Activated CD4-positive, alpha-beta T cell treated with anti-CD3 and anti-CD28 coated beads, Interleukin-2, amount 10 ng/mL, durations not matched to agents 24 days and 14 days (primary cell): ENCODE measurements at regions of chr20 and their contacts with region 1.

Region 1: GRCh38 chr20:53750827-53751619 is 157.4 kb upstream of the ZNF217 start:
- DNase-seq: peak; percentile 89
- H3K4me3 Mint-ChIP-seq: peak overlapping the region; percentile 51
- H3K27ac Mint-ChIP-seq: peak overlapping the region; percentile 98
- H3K4me1 Mint-ChIP-seq: peaks cover 63% of the 10 kb centered on the region
- H3K27me3 Mint-ChIP-seq: no peaks in the 10 kb centered on the region

Region 2: DNA sequence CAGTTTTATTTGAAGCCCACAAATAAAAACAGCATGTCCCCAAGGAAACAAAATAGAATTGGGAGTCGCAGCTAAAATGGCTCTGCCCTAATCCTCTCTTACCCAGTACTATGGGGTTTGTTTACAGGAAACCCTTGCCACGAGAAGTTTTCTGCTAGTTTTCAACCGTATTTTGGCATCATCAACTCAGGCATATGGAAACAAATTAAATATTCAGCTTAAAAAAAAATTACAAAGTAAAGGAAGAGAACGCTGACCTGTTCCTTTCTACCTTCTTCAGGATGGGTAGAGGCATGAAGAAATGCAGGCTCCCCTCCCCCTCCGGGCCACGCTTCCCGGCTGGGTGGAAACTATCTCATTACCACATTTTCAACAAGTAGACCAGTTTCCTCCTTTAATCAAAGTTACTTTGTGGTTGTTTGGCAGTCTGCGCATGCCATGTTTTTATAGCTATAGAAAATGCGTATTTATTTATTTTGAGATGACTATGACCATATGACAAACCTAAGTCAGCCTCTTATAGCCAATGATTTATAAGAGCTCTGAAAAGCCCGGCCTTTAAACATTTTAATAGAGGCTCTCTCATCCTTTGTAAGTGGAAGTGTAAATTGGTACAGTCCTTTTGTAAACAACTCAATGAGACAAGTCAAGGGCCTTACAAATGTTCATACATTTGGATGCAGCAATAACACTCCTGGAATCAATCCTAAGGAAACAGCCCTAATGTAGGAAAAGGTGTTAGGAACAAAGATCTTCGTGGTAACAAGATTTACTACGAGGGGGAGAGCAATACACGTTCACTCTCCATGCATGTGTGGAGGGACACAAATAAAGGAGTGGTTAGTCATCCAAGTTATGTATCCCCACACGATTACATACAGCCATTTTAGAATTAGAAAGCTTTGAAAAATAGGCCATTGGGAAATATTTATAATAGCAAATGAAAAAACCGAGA is 141.3 kb before region 1 on chr20:
- intact Hi-C with region 1: loop called (anchors 1 kb)
- DNase-seq: peak; percentile 93
- H3K4me3 Mint-ChIP-seq: peak overlapping the region; percentile 83
- H3K27ac Mint-ChIP-seq: peak overlapping the region; percentile 97
- H3K4me1 Mint-ChIP-seq: peaks cover 27% of the 10 kb centered on the region
- H3K27me3 Mint-ChIP-seq: no peaks in the 10 kb centered on the region

Region 3: DNA sequence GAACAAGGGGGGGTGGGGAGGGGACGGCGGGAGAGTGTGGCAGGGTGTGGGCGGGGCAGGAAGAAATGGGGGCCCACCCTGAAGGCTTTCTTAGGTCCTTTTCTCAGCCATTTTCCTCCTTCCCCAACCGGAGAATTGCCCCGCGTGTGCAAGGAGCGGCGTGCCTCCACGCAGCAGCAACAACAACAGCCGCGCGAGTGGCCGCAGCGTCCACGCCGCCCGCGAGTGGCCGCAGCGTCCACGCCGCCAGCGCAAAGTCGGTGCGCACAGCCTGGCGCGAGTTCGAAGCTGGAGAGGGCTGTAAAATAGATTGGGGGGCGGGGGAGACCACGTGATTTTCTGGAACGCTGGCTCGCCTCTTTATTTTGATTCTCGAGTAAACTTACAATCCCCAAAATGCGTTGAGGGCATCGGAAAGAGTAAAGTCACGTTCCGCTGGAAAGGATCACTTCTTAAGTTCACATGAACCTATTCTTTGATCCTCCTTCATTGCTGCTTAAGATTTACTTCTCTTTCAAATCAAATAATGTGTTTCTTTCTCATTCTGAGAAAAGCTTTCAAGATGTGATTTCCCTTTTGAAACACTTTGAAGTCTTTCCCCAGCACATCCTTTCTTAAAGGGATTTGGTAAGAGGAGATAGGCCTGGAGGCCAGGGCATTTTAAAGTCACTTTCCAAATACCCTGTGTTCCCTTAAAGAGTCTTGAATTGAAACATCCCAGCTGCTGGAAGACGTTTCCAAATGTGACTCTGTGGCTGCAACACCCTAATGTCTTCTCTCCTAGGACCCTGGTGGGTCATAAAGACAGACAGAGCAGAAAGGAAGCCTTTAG is 90.7 kb before region 1 on chr20:
- intact Hi-C with region 1: loop called (anchors 2 kb)
- DNase-seq: peak; percentile 82
- H3K4me3 Mint-ChIP-seq: peak overlapping the region; percentile 84
- H3K27ac Mint-ChIP-seq: peak overlapping the region; percentile 93
- H3K4me1 Mint-ChIP-seq: peaks cover 54% of the 10 kb centered on the region
- H3K27me3 Mint-ChIP-seq: no peaks in the 10 kb centered on the region

Region 4: DNA sequence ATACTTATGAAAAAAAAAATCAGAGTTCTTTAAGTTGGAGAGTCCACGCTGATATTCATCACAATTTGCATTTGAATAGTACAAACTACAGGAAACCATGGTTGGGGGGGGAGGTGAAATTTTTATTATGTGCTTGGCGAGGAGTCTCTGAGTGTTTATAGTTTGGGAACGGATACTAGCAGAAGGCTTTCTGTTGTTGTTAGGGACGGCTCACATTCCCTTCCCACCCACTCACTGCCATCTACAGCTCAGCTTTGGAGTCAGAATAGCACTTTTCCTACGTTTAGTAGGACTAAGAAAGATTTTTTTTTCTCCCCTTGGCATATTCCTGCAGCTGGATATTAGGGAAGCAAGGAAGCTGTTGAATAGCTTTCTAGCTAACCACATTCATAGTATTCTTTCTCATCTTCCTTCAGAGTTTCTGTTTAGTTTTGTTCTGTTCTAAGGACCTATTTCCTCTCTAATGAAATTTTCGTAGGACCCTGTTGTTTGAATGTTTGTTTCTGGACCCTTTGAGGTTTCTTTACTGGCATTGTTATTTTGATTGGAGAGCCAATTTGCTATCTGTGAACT is 77.7 kb after region 1 on chr20:
- intact Hi-C with region 1: loop called (anchors 2 kb)
- DNase-seq: no peak
- H3K4me3 Mint-ChIP-seq: peak overlapping the region; percentile 91
- H3K27ac Mint-ChIP-seq: peak overlapping the region; percentile 96
- H3K4me1 Mint-ChIP-seq: peaks cover 50% of the 10 kb centered on the region
- H3K27me3 Mint-ChIP-seq: no peaks in the 10 kb centered on the region

Region 5: GRCh38 chr20:53869466-53870258 is 118.6 kb after region 1 on chr20:
- intact Hi-C with region 1: loop called (anchors 1 kb)
- DNase-seq: peak; percentile 92
- H3K4me3 Mint-ChIP-seq: peak overlapping the region; percentile 57
- H3K27ac Mint-ChIP-seq: peak overlapping the region; percentile 92
- H3K4me1 Mint-ChIP-seq: peaks cover 63% of the 10 kb centered on the region
- H3K27me3 Mint-ChIP-seq: no peaks in the 10 kb centered on the region

Region 6: GRCh38 chr20:53939572-53940359 is 188.7 kb after region 1 on chr20:
- intact Hi-C with region 1: loop called (anchors 5 kb)
- DNase-seq: peak; percentile 91
- H3K4me3 Mint-ChIP-seq: no peak overlapping the region
- H3K27ac Mint-ChIP-seq: peak overlapping the region; percentile 8
- H3K4me1 Mint-ChIP-seq: peaks cover 45% of the 10 kb centered on the region
- H3K27me3 Mint-ChIP-seq: no peaks in the 10 kb centered on the region

Region 7: GRCh38 chr20:55316747-55317146 is 1565.7 kb after region 1 on chr20:
- intact Hi-C with region 1: no loop called
- DNase-seq: no peak
- H3K4me3 Mint-ChIP-seq: no peak overlapping the region
- H3K27ac Mint-ChIP-seq: no peak overlapping the region
- H3K4me1 Mint-ChIP-seq: no peaks in the 10 kb centered on the region
- H3K27me3 Mint-ChIP-seq: no peaks in the 10 kb centered on the region